ENCODE measurements at regions of chr20 and their contacts with region 1.

Region 1: GRCh38 chr20:38357653-38358207 is 11.4 kb downstream of the LBP start:
- DNase-seq: no peak
- H3K4me3 ChIP-seq: no peak overlapping the region
- H3K27ac ChIP-seq: no peak overlapping the region
- H3K4me1 ChIP-seq: no peaks in the 10 kb centered on the region
- H3K27me3 ChIP-seq: no peaks in the 10 kb centered on the region
- CTCF ChIP-seq: no peak
- POLR2A ChIP-seq: no peak

Region 2: GRCh38 chr20:38373231-38373867 is 15.6 kb after region 1 on chr20:
- CTCF ChIA-PET with region 1: interaction called, 27 read pairs
- POLR2A ChIA-PET with region 1: no interaction called
- dilution Hi-C with region 1: no loop called
- intact Hi-C with region 1: no loop called
- DNase-seq: peak; percentile 36
- H3K4me3 ChIP-seq: no peak overlapping the region
- H3K27ac ChIP-seq: no peak overlapping the region
- H3K4me1 ChIP-seq: no peaks in the 10 kb centered on the region
- H3K27me3 ChIP-seq: peaks cover 14 to 17% of the 10 kb centered on the region in 2 experiments
- CTCF ChIP-seq: no peak
- POLR2A ChIP-seq: no peak

Measured in endothelial cell of umbilical vein (primary cell).